Right ventricle myocardium inferior (tissue), 1 donor: ENCODE measurements at regions of chr22 and their contacts with region 1.

Region 1: GRCh38 chr22:32265882-32266767 is 11.0 kb upstream of the SLC5A4 start:
- DNase-seq: no peak
- ATAC-seq: no peak

Region 2: GRCh38 chr22:31970490-31971444 is 295.4 kb before region 1 on chr22:
- intact Hi-C with region 1: loop called (anchors 2 kb)
- DNase-seq: peak; percentile 93
- ATAC-seq: peak; percentile 95

Region 3: GRCh38 chr22:32103658-32104315 is 162.3 kb before region 1 on chr22:
- intact Hi-C with region 1: loop called (anchors 10 kb)
- DNase-seq: no peak
- ATAC-seq: no peak

Region 4: DNA sequence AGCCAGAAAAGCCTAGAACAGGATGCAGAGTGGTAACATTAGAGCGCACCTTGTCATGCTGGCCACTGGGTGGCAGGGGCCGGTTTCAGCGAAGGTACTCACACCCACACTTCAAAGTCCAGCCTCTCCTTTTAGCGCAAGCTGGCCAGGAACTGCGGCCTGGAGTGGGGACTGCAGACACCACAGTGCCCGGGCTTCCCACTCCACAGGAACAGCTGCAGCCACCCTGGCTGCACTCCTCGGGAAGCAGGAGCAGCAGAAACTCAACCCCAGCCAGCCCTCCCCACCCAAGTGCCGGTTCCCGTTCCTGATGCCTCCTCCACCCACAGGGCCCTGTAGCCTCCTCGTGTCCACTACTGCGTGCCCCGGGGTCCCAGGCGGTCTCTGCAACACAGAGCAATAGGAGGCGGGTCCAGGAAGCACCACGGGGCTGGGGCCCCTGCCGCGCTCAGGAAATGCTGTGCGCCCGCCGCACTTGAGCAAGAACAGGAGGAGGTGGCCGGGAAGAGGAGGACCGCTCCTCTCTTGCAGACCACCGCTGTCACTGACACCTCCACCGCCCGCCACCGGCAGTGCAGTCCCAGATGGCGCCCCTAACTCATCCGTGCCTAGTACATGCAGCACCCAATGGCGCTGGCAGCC is 63.5 kb before region 1 on chr22:
- intact Hi-C with region 1: loop called (anchors 5 kb)
- DNase-seq: no peak
- ATAC-seq: peak; percentile 66

Region 5: GRCh38 chr22:32281072-32281471 is 14.9 kb after region 1 on chr22:
- intact Hi-C with region 1: no loop called
- DNase-seq: no peak
- ATAC-seq: no peak